AG04450 (cell line): ENCODE measurements at regions of chr22 and their contacts with region 1.

Region 1: GRCh38 chr22:36204632-36205015 is 3.0 kb upstream of the APOL4 start:
- DNase-seq: no peak
- H3K4me3 ChIP-seq: no peak overlapping the region
- H3K27ac ChIP-seq: no peak overlapping the region
- H3K27me3 ChIP-seq: peaks cover 6% of the 10 kb centered on the region
- CTCF ChIP-seq: no peak

Region 2: DNA sequence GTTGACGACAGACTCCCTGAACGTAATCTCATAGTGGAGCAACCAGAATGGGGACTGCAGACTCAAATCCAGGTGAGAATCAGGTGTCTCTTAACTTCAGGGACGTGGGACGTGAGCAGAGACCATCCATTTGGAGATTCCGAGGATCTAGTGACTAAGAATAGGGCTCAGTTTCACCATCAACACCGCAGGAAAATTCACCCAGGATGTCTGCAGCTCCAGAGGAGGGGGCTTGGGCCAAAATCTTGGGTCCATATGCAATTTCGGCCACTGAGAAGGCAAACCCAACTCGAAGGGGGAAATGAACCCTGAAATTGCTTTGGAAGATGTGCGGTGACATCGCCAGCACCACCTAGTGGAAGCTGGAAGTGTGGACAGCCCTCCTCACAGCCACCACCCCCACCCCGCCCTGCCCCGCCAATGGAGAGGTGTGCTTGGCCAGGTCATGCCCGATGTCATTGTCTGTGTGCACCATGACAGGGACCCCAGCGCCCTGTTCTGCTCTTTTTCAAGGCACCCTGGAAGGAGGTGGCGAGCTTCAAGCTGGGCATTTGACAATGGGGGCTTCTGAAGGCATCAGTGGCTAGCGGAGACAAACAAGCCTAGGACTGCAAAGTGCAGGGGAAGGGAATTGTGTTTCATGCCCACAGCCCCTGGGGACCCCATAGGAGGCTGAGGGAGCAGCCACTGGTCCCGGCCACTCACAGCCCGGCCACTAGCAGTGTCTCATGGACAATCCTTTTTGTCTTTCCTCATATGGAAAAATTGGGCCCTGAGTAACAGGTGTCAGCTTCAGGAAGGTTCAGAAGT is 73.1 kb after region 1 on chr22:
- CTCF ChIA-PET with region 1: interaction called, 14 read pairs
- POLR2A ChIA-PET with region 1: no interaction called
- DNase-seq: peak; percentile 29
- H3K4me3 ChIP-seq: no peak overlapping the region
- H3K27ac ChIP-seq: peak overlapping the region; percentile 31
- H3K27me3 ChIP-seq: no peaks in the 10 kb centered on the region
- CTCF ChIP-seq: peak; percentile 73